OCI-LY7 (cell line): ENCODE measurements at regions of chr6 and their contacts with region 1.

Region 1: DNA sequence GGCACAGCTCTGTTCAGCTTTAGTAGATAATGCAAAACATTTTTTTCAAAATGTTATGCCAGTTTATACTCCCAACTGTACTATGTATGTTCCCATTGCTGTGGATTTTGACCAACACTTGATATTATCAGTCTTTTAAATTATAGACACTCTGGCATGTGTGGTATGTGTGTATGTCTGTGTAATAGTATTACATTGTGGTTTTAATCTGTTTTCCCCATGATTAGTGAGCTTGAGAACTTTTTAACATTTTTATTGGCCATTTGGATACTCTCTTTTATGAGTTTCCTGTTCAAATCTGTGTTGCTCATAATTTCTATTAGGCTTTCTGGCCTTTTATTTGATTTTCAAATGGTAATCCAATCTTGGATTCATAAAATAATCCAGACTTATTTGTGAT is 69.2 kb upstream of the TXNDC5 start:
- DNase-seq: no peak
- H3K4me3 ChIP-seq: no peak overlapping the region
- H3K27ac ChIP-seq: no peak overlapping the region
- H3K4me1 ChIP-seq: peaks cover 11% of the 10 kb centered on the region
- CTCF ChIP-seq: no peak

Region 2: GRCh38 chr6:7969361-7969760 is 10.5 kb before region 1 on chr6:
- CTCF ChIA-PET with region 1: no interaction called
- POLR2A ChIA-PET with region 1: interaction called, 13 read pairs
- intact Hi-C with region 1: no loop called
- DNase-seq: no peak
- H3K4me3 ChIP-seq: no peak overlapping the region
- H3K27ac ChIP-seq: no peak overlapping the region
- H3K4me1 ChIP-seq: peaks cover 10% of the 10 kb centered on the region
- CTCF ChIP-seq: no peak